ENCODE measurements at regions of chr1 and their contacts with region 1.

Region 1: GRCh38 chr1:70361727-70362398 is 7.3 kb upstream of the ANKRD13C start:
- DNase-seq: peak; percentile 69
- H3K4me3 ChIP-seq: no peak overlapping the region
- H3K27ac ChIP-seq: peak overlapping the region; percentile 29
- H3K4me1 ChIP-seq: peaks cover 16% of the 10 kb centered on the region
- H3K27me3 ChIP-seq: no peaks in the 10 kb centered on the region
- CTCF ChIP-seq: no peak

Region 2: DNA sequence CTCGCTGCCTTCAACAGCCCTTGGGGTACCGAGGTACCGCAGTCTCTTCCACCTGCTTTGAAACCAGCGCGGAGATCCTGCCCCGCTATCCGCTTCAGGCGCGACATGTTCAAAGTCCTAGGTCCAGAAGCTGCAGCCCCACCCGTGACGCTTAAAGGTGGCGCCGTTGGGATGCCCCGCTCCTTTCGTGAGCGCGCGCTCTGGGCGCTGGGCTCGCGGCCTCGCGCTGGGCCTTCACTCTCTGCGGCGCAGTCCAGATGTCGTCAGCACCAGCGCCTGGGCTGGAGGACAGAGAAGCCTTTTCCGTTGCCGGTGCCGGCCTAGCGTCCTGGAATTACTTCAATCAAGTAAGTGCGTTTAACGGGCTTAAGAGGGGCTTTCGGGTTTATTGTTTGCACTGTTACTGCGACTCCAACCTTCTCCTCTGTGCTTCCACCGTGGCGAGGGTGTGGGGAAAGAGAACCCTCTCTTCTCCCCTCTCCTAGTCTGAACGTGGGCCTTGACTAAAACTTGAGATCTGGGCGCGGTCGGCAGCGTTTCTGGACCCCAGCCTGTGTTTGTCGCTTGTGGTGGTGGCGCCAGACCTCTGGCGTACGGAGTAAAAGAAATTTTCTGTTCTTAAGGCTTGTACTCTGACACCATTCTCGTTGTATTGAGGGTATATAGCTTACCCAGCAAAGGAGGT is 156.3 kb before region 1 on chr1 and contains the start of gene LRRC40:
- CTCF ChIA-PET with region 1: no interaction called
- POLR2A ChIA-PET with region 1: no interaction called
- intact Hi-C with region 1: loop called (anchors 5 kb)
- DNase-seq: peak; percentile 99
- H3K4me3 ChIP-seq: peak within 1 kb of the TSS; percentile 67
- H3K27ac ChIP-seq: peak within 1 kb of the TSS; percentile 91
- H3K4me1 ChIP-seq: peaks cover 15% of the 10 kb centered on the region
- H3K27me3 ChIP-seq: no peaks in the 10 kb centered on the region
- CTCF ChIP-seq: no peak; the same call in 1 of the 2 replicates
- total RNA-seq, gene LRRC40: 32.7 and 33.3 TPM in 2 replicates

Region 3: GRCh38 chr1:70227439-70227838 is 134.4 kb before region 1 on chr1:
- CTCF ChIA-PET with region 1: no interaction called
- POLR2A ChIA-PET with region 1: no interaction called
- intact Hi-C with region 1: no loop called
- DNase-seq: no peak
- H3K4me3 ChIP-seq: no peak overlapping the region
- H3K27ac ChIP-seq: peak overlapping the region; percentile 33
- H3K4me1 ChIP-seq: peaks cover 22% of the 10 kb centered on the region
- H3K27me3 ChIP-seq: no peaks in the 10 kb centered on the region
- CTCF ChIP-seq: no peak